Left lung (tissue), 14 donors: ENCODE measurements at regions of chr2 and their contacts with region 1.

Region 1: GRCh38 chr2:27086090-27086723 is 365 bp upstream of the KHK start:
- DNase-seq: peak; percentile 94 to 100 (median 96)
- ATAC-seq: peak; percentile 91
- H3K4me3 ChIP-seq: peak overlapping the region; percentile 44 to 68
- H3K27ac ChIP-seq: peak overlapping the region; percentile 91 to 93
- H3K4me1 ChIP-seq: peaks cover 14 to 40% of the 10 kb centered on the region in 2 donors
- H3K27me3 ChIP-seq: no peaks in the 10 kb centered on the region
- CTCF ChIP-seq: peak; percentile 81 to 97

Region 2: DNA sequence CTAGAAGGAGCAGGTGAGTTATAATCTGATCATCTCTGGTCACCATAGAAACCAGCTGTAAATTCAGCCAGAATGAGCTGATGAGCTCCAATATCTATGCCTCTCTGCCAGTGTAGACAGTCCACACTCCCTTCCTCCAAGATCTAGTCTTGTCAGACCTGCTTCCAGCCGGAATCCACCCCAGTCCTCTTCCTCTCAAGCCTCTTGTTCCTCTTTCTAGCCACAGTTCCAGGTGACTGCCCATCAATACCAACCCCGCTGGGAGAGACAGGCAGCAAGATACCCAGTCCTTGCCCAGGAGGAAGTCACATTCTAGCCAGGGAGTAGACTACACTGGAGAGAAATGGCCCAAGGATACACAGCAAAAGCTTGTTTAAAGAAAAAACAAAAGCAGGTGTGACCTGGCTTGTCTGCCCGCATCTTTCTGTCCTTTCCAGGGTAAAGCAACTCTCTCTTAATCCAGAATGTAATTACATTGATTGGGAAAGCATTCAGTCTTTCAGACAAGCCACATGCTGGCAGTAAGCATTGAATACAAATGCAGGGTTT is 331.1 kb before region 1 on chr2:
- intact Hi-C with region 1: no loop called
- DNase-seq: no peak
- ATAC-seq: no peak
- H3K4me3 ChIP-seq: no peak overlapping the region
- H3K27ac ChIP-seq: no peak overlapping the region
- H3K4me1 ChIP-seq: peaks cover 6 to 7% of the 10 kb centered on the region in 2 donors
- H3K27me3 ChIP-seq: no peaks in the 10 kb centered on the region
- CTCF ChIP-seq: no peak

Region 3: GRCh38 chr2:26933431-26934334 is 152.5 kb before region 1 on chr2:
- intact Hi-C with region 1: no loop called
- DNase-seq: no peak
- ATAC-seq: no peak
- H3K4me3 ChIP-seq: no peak overlapping the region
- H3K27ac ChIP-seq: no peak overlapping the region
- H3K4me1 ChIP-seq: no peaks in the 10 kb centered on the region
- H3K27me3 ChIP-seq: peaks cover 0 to 26% of the 10 kb centered on the region in 2 donors
- CTCF ChIP-seq: no peak

Region 4: GRCh38 chr2:26968001-26968400 is 118.2 kb before region 1 on chr2:
- intact Hi-C with region 1: loop called in 1 of 2 experiments (anchors 10 kb)
- DNase-seq: no peak
- ATAC-seq: no peak
- H3K4me3 ChIP-seq: no peak overlapping the region
- H3K27ac ChIP-seq: no peak overlapping the region
- H3K4me1 ChIP-seq: peaks cover 0 to 23% of the 10 kb centered on the region in 2 donors
- H3K27me3 ChIP-seq: peaks cover 0 to 5% of the 10 kb centered on the region in 2 donors
- CTCF ChIP-seq: no peak

Region 5: DNA sequence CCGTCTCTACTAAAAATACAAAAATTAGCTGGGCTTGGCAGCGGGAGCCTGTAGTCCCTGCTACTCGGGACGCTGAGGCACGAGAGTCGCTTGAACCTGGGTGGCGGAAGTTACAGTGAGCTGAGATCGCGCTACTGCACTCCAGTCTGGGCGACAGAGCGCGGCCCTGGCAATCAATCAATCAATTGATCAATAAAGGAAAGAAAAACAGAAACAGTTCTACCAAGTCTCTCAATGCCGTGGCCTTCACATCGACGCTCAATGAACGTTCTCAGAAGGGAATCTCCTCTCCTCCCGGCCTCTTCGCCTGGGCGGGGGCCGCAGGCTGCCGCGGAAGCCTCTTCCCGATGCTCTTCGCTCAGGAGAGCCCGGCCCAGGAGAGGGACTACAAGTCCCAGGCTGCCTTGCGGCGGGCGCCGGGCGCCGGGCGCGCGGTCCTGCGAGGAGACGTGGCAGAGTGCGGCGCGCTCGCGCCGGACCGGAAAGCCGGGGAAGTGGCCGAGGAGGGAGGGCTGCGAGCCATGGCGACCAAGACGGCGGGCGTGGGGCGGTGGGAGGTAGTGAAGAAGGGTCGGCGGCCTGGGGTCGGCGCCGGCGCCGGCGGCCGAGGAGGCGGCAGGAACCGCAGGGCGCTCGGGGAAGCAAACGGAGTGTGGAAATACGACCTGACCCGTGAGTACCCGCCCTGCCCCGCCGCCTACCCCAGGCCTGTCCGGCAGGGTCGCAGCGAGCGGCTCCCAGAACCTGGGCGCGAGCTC is 53.5 kb before region 1 on chr2 and contains the start of gene TMEM214:
- intact Hi-C with region 1: loop called in 1 of 2 experiments (anchors 10 kb)
- DNase-seq: peak; percentile 78 to 99 (median 91)
- ATAC-seq: peak; percentile 99
- H3K4me3 ChIP-seq: peak within 1 kb of the TSS; percentile 92 to 95
- H3K27ac ChIP-seq: peak within 1 kb of the TSS; percentile 82 to 84
- H3K4me1 ChIP-seq: peaks cover 19 to 32% of the 10 kb centered on the region in 2 donors
- H3K27me3 ChIP-seq: no peaks in the 10 kb centered on the region
- CTCF ChIP-seq: peak in 1 of 2 donors; percentile 23
- polyA plus RNA-seq, gene TMEM214: 59.8 to 90.4 (median 67.8) TPM

Region 6: GRCh38 chr2:27494944-27495554 is 408.8 kb after region 1 on chr2 and contains the start of gene FNDC4:
- intact Hi-C with region 1: no loop called
- DNase-seq: peak; percentile 35 to 82 (median 46)
- ATAC-seq: peak; percentile 72
- H3K4me3 ChIP-seq: peak within 1 kb of the TSS; percentile 43
- H3K27ac ChIP-seq: no peak within 1 kb of the TSS
- H3K4me1 ChIP-seq: peaks cover 0 to 21% of the 10 kb centered on the region in 2 donors
- H3K27me3 ChIP-seq: peaks cover 0 to 65% of the 10 kb centered on the region in 2 donors
- CTCF ChIP-seq: no peak
- polyA plus RNA-seq, gene FNDC4: 12.3 to 16.6 (median 14.0) TPM